ENCODE measurements at regions of chr9 and their contacts with region 1.

Region 1: GRCh38 chr9:132694157-132694556 is 23.9 kb downstream of the GTF3C4 start:
- DNase-seq: peak; percentile 24
- H3K4me3 ChIP-seq: no peak overlapping the region
- H3K27ac ChIP-seq: no peak overlapping the region
- H3K4me1 ChIP-seq: no peaks in the 10 kb centered on the region
- H3K27me3 ChIP-seq: no peaks in the 10 kb centered on the region
- CTCF ChIP-seq: peak in 1 of 2 donors; percentile 22

Region 2: GRCh38 chr9:132721661-132722060 is 27.5 kb after region 1 on chr9:
- CTCF ChIA-PET with region 1: no interaction called
- dilution Hi-C with region 1: loop called (anchors 5 kb)
- in situ Hi-C with region 1: no loop called
- intact Hi-C with region 1: no loop called
- DNase-seq: no peak
- H3K4me3 ChIP-seq: no peak overlapping the region
- H3K27ac ChIP-seq: no peak overlapping the region
- H3K4me1 ChIP-seq: no peaks in the 10 kb centered on the region
- H3K27me3 ChIP-seq: peaks cover 7% of the 10 kb centered on the region
- CTCF ChIP-seq: no peak

Measured in mammary epithelial cell (primary cell).